H1 (cell line): ENCODE measurements at regions of chr10 and their contacts with region 1.

Region 1: GRCh38 chr10:76036111-76036940 is 604.9 kb downstream of the LRMDA start:
- DNase-seq: peak; percentile 34 to 91
- H3K4me3 ChIP-seq: no peak overlapping the region
- H3K27ac ChIP-seq: no peak overlapping the region
- H3K4me1 ChIP-seq: peaks cover 0 to 3% (median under 1%) of the 10 kb centered on the region in 4 experiments; a peak in 2 of 7 replicates
- H3K27me3 ChIP-seq: no peaks in the 10 kb centered on the region
- CTCF ChIP-seq: peak; percentile 83 to 86 (median 83)
- EP300 ChIP-seq: no peak
- POLR2A ChIP-seq: no peak
- RAD21 ChIP-seq: peak; percentile 91 to 92

Region 2: GRCh38 chr10:75858339-75858738 is 178.0 kb before region 1 on chr10:
- CTCF ChIA-PET with region 1: no interaction called
- POLR2A ChIA-PET with region 1: no interaction called
- DNase-seq: no peak
- H3K4me3 ChIP-seq: no peak overlapping the region
- H3K27ac ChIP-seq: no peak overlapping the region
- H3K4me1 ChIP-seq: peaks cover 8 to 10% (median 9%) of the 10 kb centered on the region in 4 experiments
- H3K27me3 ChIP-seq: no peaks in the 10 kb centered on the region
- CTCF ChIP-seq: no peak
- EP300 ChIP-seq: no peak
- POLR2A ChIP-seq: no peak
- RAD21 ChIP-seq: no peak

Region 3: DNA sequence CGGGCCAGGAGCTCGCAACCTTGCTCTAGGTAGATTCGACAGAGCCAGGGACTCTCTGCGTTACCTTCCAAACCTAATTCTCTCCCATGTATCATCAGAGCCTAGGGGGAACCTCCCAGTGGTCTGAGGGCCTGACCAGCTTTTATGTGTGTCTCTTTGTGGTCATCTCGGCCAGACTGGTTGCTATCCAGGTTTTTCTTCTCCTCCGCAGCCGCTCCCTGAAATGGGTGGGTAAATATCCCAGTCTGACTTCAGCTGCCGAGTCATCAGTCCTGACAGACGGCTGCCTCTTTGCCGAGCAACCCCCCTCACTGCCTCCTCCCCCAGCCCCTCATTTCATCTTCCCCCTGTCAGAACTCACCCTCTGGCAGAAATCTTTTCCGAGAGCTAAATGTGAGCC is 26.8 kb before region 1 on chr10:
- CTCF ChIA-PET with region 1: interaction called, 10 read pairs
- POLR2A ChIA-PET with region 1: no interaction called
- DNase-seq: no peak
- H3K4me3 ChIP-seq: no peak overlapping the region
- H3K27ac ChIP-seq: no peak overlapping the region
- H3K4me1 ChIP-seq: peaks cover 0 to 10% (median 3%) of the 10 kb centered on the region in 4 experiments; a peak in 3 of 7 replicates
- H3K27me3 ChIP-seq: no peaks in the 10 kb centered on the region
- CTCF ChIP-seq: no peak
- EP300 ChIP-seq: no peak
- POLR2A ChIP-seq: no peak
- RAD21 ChIP-seq: no peak

Region 4: GRCh38 chr10:76021398-76021797 is 14.9 kb before region 1 on chr10:
- CTCF ChIA-PET with region 1: interaction called, 44 read pairs
- POLR2A ChIA-PET with region 1: no interaction called
- DNase-seq: no peak
- H3K4me3 ChIP-seq: no peak overlapping the region
- H3K27ac ChIP-seq: no peak overlapping the region
- H3K4me1 ChIP-seq: no peaks in the 10 kb centered on the region
- H3K27me3 ChIP-seq: no peaks in the 10 kb centered on the region
- CTCF ChIP-seq: no peak
- EP300 ChIP-seq: no peak
- POLR2A ChIP-seq: no peak
- RAD21 ChIP-seq: no peak

Region 5: DNA sequence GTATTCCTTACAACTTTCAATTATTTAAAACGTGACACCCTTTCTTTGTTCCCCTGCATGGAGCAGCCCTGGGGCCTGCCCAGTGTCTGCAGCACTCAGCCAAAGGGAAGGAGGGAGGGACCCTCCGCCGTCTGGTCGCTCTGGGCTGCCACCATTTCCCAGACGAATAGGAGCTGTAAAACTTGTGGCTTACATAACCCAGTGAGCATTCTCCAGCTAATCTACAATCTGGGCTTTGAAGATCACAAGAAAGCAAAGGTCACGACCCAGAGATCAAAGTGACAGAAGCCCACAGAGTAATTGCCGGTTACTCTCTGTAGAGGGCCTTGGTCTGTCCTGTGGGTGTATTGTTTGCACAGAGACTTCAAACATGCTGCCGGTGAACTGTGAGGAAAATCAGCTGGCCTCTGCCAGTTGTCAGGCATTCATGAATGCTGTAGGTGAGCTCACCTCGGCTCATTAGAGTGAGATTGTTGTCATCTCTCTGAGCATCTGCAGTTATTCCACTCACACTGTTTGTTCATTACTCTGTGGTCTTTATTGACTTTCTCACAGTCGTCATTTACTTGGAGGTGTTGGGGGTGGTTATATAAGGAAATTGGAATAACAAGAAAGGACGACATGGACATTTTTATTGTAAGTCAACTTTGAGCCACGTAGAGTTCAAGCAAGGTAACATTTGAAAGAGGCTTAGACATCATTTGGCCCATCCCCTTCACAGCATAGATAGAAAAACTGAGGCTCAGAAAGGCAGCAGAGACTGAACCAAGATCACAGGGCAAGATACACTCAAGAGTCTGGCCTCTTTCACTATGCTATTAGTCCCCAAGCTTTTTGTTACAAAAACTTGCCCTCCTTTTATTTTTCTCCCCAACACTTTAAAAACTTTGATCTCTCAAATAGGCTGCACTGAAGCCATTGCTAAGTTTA is 14.9 kb after region 1 on chr10:
- CTCF ChIA-PET with region 1: interaction called, 27 read pairs
- POLR2A ChIA-PET with region 1: no interaction called
- DNase-seq: no peak
- H3K4me3 ChIP-seq: no peak overlapping the region
- H3K27ac ChIP-seq: no peak overlapping the region
- H3K4me1 ChIP-seq: no peaks in the 10 kb centered on the region
- H3K27me3 ChIP-seq: peaks cover 0 to 1% (median 0%) of the 10 kb centered on the region in 4 experiments; a peak in 1 of 7 replicates
- CTCF ChIP-seq: no peak
- EP300 ChIP-seq: no peak
- POLR2A ChIP-seq: no peak
- RAD21 ChIP-seq: no peak

Region 6: GRCh38 chr10:76086761-76087639 is 50.7 kb after region 1 on chr10:
- CTCF ChIA-PET with region 1: interaction called, 19 read pairs
- POLR2A ChIA-PET with region 1: no interaction called
- DNase-seq: peak in 1 of 2 experiments; percentile 61
- H3K4me3 ChIP-seq: no peak overlapping the region
- H3K27ac ChIP-seq: no peak overlapping the region
- H3K4me1 ChIP-seq: peaks cover 2 to 18% (median 8%) of the 10 kb centered on the region in 4 experiments; a peak in 5 of 7 replicates
- H3K27me3 ChIP-seq: peaks cover 0 to 5% (median 3%) of the 10 kb centered on the region in 4 experiments; a peak in 2 of 7 replicates
- CTCF ChIP-seq: peak; percentile 79 to 89 (median 85)
- EP300 ChIP-seq: no peak
- POLR2A ChIP-seq: no peak
- RAD21 ChIP-seq: peak; percentile 90 to 94

Region 7: DNA sequence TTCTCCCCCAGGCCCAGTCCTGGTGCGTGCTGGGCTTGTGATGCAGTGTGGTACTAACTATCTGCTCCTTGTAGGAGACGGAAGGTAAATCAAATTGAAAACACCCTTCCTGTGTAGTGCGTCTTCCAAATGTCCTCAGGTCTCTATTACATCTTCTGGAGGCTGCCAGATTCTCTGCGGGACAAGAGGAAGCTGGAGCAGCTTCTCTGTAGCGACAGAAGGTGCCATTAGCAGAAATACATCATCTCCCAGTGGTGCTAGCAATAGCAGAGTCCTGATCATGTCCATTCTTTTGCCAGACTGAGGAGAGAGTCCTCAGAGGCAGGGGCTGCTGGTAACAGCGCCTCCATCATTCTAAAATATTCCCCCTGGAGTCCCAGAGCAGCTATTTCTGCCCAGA is 70.3 kb after region 1 on chr10:
- CTCF ChIA-PET with region 1: no interaction called
- POLR2A ChIA-PET with region 1: no interaction called
- DNase-seq: no peak
- H3K4me3 ChIP-seq: no peak overlapping the region
- H3K27ac ChIP-seq: no peak overlapping the region
- H3K4me1 ChIP-seq: peaks cover 0 to 7% (median 3%) of the 10 kb centered on the region in 4 experiments; a peak in 1 of 7 replicates
- H3K27me3 ChIP-seq: 0 out of 7 replicates have a peak, but pooled peaks cover 0 to 5% (median 0%) of the 10 kb centered on the region in 4 experiments
- CTCF ChIP-seq: no peak
- EP300 ChIP-seq: no peak
- POLR2A ChIP-seq: no peak
- RAD21 ChIP-seq: no peak

Region 8: GRCh38 chr10:76303682-76304316 is 267.5 kb after region 1 on chr10:
- CTCF ChIA-PET with region 1: interaction called, 16 read pairs
- POLR2A ChIA-PET with region 1: no interaction called
- DNase-seq: peak; percentile 41 to 62
- H3K4me3 ChIP-seq: no peak overlapping the region
- H3K27ac ChIP-seq: no peak overlapping the region
- H3K4me1 ChIP-seq: peaks cover 0 to 3% (median 0%) of the 10 kb centered on the region in 4 experiments; a peak in 1 of 7 replicates
- H3K27me3 ChIP-seq: peaks cover 0 to 6% (median 0%) of the 10 kb centered on the region in 4 experiments; a peak in 2 of 7 replicates
- CTCF ChIP-seq: peak; percentile 53 to 87 (median 80)
- EP300 ChIP-seq: no peak
- POLR2A ChIP-seq: no peak
- RAD21 ChIP-seq: peak; percentile 92 to 98